ENCODE measurements at regions of chr11 and their contacts with region 1.

Region 1: DNA sequence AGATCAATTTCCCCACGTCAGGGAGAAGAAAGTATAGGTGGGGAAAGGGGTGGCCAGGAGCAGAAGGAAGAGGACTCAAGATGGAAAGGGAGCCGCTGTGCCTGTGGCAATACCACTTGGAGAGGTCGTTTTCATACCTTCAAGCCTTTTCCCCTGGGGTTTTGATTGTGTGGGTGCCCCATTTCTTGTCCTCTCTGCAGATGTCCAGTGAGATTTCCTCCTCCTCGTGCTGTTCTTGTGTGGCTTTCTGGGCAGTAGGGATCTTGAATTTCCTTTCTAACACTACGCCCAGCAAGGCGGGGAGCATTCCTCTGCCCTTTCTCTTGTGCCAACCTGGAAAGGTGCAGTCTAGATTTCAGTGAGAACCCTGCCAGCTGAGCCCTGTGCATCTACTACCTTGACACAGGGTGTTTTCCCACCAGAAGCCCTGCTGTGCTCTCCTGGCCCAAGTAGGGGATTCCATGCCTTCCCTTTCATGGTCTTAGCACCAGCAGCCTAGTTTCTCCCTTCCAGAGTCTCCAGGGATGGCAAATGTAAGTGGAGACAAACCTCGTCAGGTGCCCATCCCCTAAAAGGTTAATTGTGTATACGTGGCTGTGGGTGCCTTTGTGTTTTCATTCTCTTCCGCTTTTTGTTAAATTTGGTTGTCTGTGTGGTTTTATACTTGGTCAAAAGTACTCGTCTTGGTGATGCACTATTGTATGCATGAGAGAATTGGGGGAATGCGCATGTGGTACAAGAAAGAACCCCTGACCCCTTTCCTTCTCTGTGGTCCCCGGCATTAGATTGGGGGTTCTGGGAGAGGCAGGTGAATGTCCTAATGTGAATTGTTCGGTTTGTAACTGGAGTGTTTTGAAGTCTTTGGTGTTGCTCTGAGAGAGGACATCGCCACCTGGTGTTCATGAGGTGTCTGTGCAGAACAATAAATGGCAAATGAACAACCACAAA is 71.4 kb upstream of the MPEG1 start:
- DNase-seq: peak in 3 of 5 donors; percentile 29 to 45 (median 37)
- ATAC-seq: peak in 3 of 4 donors; percentile 58 to 62 (median 60)
- H3K4me3 ChIP-seq: peak overlapping the region in 1 of 12 donors; percentile 10
- H3K27ac ChIP-seq: no peak overlapping the region
- H3K4me1 ChIP-seq: peaks cover 0 to 6% (median 0%) of the 10 kb centered on the region in 12 donors
- H3K27me3 ChIP-seq: peaks cover 0 to 10% (median 0%) of the 10 kb centered on the region in 9 donors
- CTCF ChIP-seq: peak; percentile 72 to 87 (median 80)
- POLR2A ChIP-seq: no peak

Region 2: GRCh38 chr11:59171508-59172322 is 112.4 kb before region 1 on chr11 and contains the start of gene DTX4:
- intact Hi-C with region 1: loop called (anchors 1 to 5 kb)
- DNase-seq: peak; percentile 91 to 96 (median 92)
- ATAC-seq: peak; percentile 95 to 97 (median 96)
- H3K4me3 ChIP-seq: peak within 1 kb of the TSS; percentile 41 to 79 (median 64)
- H3K27ac ChIP-seq: peak within 1 kb of the TSS in 11 of 12 donors; percentile 22 to 74 (median 49)
- H3K4me1 ChIP-seq: peaks cover 0 to 27% (median 10%) of the 10 kb centered on the region in 12 donors
- H3K27me3 ChIP-seq: peaks cover 0 to 9% (median 0%) of the 10 kb centered on the region in 9 donors
- CTCF ChIP-seq: peak; percentile 70 to 90 (median 83)
- POLR2A ChIP-seq: peak in 1 of 2 donors; percentile 8
- total RNA-seq, gene DTX4: 0.74 to 6.8 (median 2.1) TPM

Region 3: DNA sequence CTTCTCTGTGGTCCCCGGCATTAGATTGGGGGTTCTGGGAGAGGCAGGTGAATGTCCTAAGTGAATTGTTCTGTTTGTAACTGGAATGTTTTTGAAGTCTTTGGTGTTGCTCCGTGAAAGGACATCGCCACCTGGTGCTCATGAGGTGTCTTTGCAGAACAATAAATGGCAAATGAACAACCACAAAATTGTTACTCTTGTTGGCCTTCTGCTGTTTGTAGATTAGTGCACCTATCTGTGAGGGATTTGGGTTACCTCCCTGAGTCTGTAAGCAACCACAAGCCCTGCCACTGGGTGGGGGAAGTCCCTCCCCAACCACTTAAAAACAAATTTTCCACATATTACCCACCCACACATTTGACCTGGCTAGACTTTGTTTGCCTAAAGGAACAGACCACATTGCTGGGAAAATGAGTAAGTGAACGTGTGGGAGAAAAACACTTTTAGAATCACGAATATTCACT is 76.1 kb before region 1 on chr11:
- intact Hi-C with region 1: loop called in 7 of 10 experiments (anchors 2 to 5 kb)
- DNase-seq: peak in 2 of 5 donors; percentile 29 to 43
- ATAC-seq: peak in 3 of 4 donors; percentile 29 to 81 (median 53)
- H3K4me3 ChIP-seq: peak overlapping the region in 6 of 12 donors; percentile 22 to 61 (median 32)
- H3K27ac ChIP-seq: peak overlapping the region in 5 of 12 donors; percentile 10 to 49 (median 35)
- H3K4me1 ChIP-seq: peaks cover 0 to 25% (median 6%) of the 10 kb centered on the region in 12 donors
- H3K27me3 ChIP-seq: no peaks in the 10 kb centered on the region
- CTCF ChIP-seq: peak; percentile 62 to 83 (median 73)
- POLR2A ChIP-seq: no peak

Region 4: DNA sequence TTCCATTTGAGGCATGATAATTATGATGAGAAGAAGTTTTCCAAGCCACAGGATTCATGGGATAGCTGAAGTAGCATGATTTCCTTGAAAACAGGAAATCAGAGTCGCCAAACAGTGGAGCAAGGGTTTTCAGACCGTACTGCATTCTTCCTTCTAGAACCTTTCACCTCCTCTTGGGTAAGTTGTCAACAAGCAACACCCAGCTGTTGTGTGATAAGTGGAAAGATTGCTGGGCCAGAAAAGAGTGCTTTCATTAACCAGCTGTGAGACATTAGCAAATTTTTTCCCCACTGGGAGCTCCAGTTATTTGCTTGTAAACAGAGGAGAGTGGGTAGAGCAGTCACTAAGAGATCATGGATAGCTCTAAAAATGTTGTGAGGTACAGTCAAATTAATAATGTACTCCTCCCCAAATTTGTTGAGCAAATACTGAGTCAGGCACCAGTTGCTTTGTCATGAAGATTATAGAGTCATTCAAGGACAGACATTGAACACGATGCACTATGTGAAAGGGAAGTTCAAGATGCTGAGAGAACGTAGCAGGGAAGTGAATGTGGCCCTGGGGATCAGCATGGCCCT is 59.7 kb before region 1 on chr11:
- intact Hi-C with region 1: loop called in 1 of 10 experiments (anchors 5 kb)
- DNase-seq: no peak
- ATAC-seq: peak; percentile 70 to 87 (median 80)
- H3K4me3 ChIP-seq: no peak overlapping the region
- H3K27ac ChIP-seq: peak overlapping the region; percentile 15 to 86 (median 60)
- H3K4me1 ChIP-seq: peaks cover 0 to 62% (median 10%) of the 10 kb centered on the region in 12 donors
- H3K27me3 ChIP-seq: no peaks in the 10 kb centered on the region
- CTCF ChIP-seq: no peak
- POLR2A ChIP-seq: no peak

Region 5: GRCh38 chr11:59429924-59430516 is 145.9 kb after region 1 on chr11:
- intact Hi-C with region 1: loop called in 1 of 10 experiments (anchors 10 kb)
- DNase-seq: peak in 1 of 5 donors; percentile 8
- ATAC-seq: no peak
- H3K4me3 ChIP-seq: no peak overlapping the region
- H3K27ac ChIP-seq: no peak overlapping the region
- H3K4me1 ChIP-seq: no peaks in the 10 kb centered on the region
- H3K27me3 ChIP-seq: peaks cover 0 to 4% (median 0%) of the 10 kb centered on the region in 9 donors
- CTCF ChIP-seq: peak; percentile 36 to 69 (median 59)
- POLR2A ChIP-seq: no peak

Measured in heart left ventricle (tissue), 16 donors.